ENCODE measurements at regions of chr12 and their contacts with region 1.

Region 1: GRCh38 chr12:113039911-113040445 is 16.6 kb upstream of the DTX1 start:
- DNase-seq: no peak
- H3K4me3 ChIP-seq: no peak overlapping the region
- H3K27ac ChIP-seq: peak overlapping the region in 4 of 8 donors; percentile 33 to 72 (median 62)
- H3K4me1 ChIP-seq: peaks cover 0 to 20% (median 3%) of the 10 kb centered on the region in 6 donors
- H3K27me3 ChIP-seq: no peaks in the 10 kb centered on the region
- CTCF ChIP-seq: no peak
- POLR2A ChIP-seq: no peak

Region 2: DNA sequence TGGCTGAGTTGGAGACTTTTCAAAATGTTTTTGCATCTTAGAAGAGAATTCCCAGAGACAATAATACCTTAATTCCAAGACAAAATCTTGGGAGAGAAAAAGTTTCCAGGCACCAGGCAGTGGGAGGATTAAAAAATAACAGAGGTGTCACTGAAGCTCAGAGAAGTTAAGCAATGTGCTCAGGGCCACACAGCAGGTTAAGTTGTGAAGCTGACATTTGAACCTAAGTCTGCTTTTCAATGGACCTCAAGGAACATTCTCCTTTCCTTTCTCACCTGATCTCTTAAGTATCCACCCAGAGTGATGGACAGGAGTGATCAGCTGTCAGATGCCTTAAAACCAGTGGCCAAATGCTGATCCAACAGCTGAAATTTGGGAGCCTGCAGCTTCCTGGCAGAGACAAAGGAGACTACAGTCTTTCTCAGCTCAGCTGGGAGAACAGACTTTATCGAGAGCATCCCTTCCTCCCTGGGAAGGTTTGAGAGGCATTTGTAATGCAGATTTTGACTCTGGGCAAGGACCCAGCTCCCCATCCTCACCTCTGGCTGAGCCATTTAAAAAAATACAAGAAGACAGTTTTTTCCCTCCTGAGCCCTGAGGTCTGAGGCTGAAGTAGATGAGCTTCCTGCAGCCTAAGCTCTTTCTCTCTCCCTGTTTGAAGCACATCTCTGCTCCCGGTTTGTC is 423.4 kb before region 1 on chr12:
- intact Hi-C with region 1: no loop called
- DNase-seq: no peak
- H3K4me3 ChIP-seq: no peak overlapping the region
- H3K27ac ChIP-seq: no peak overlapping the region
- H3K4me1 ChIP-seq: no peaks in the 10 kb centered on the region
- H3K27me3 ChIP-seq: peaks cover 0 to 63% (median 5%) of the 10 kb centered on the region in 7 donors
- CTCF ChIP-seq: no peak
- POLR2A ChIP-seq: no peak

Region 3: GRCh38 chr12:112898380-112898779 is 141.6 kb before region 1 on chr12:
- intact Hi-C with region 1: loop called (anchors 5 kb)
- DNase-seq: no peak
- H3K4me3 ChIP-seq: no peak overlapping the region
- H3K27ac ChIP-seq: no peak overlapping the region
- H3K4me1 ChIP-seq: peaks cover 8 to 47% (median 20%) of the 10 kb centered on the region in 6 donors
- H3K27me3 ChIP-seq: no peaks in the 10 kb centered on the region
- CTCF ChIP-seq: no peak
- POLR2A ChIP-seq: no peak